ENCODE measurements at regions of chr17 and their contacts with region 1.

Region 1: DNA sequence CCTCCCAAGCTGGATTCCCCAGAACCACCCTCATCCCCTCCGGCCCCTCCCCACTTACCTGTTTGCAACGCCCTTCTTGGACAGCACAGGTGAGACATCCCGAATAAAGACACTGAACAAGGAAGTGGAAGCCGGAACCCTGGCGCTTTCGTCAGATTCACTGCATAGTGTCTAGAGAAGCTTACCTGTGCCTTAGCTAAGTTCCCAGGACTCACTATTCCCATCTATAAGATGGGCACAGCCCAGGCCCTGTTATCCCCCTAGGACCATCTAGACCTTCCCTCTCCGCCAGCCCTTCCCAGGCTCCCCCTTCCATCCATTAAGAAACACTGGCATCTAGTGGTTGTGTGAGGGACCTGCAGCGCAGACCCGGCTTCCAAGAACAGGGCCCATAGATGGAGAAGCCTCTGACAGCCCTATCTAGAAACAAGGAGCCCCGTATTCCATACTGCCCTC is 26.9 kb upstream of the RPL38 start:
- DNase-seq: peak; percentile 68 to 72 (median 72)
- ATAC-seq: peak; percentile 97
- H3K4me3 ChIP-seq: no peak overlapping the region
- H3K27ac ChIP-seq: no peak overlapping the region
- H3K4me1 ChIP-seq: no peaks in the 10 kb centered on the region
- H3K27me3 ChIP-seq: peaks cover 4 to 34% of the 10 kb centered on the region in 2 experiments; a peak in 3 of 5 replicates
- CTCF ChIP-seq: peak; percentile 84 to 91 (median 89)
- EP300 ChIP-seq: no peak
- POLR2A ChIP-seq: no peak
- RAD21 ChIP-seq: peak; percentile 88 to 96

Region 2: DNA sequence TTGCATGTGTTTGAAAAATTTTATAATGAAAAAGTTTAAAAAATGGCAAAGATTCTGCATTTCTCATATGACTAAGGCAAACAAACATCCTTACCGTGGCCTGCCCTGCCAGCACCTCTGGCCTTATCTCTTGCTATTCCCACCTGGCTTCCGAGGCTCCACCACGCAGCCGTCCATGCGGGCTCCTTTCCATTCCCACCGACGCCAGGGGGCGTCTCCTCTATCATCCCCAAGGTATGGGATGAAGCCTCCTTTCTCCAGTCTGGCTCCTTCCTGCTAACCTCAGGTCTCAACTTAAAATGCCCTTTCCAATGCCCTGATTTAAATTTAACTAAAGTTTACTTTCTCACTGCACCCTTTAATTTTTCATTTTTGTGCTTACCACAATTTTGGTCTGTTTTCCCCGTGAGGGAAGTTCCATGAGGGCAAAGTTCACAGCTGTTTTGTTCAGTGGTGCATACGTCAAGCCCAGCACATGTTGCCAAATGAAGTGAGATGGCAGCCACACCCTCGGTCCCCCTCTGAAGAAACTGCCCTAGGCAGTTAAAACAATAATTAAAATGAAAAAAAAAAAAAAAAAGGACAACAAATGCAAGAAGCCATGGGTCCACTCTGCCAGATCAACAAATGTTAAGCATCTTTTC is 519.0 kb before region 1 on chr17:
- CTCF ChIA-PET with region 1: interaction called, 4 read pairs
- POLR2A ChIA-PET with region 1: no interaction called
- in situ Hi-C with region 1: no loop called
- intact Hi-C with region 1: loop called (anchors 5 kb)
- DNase-seq: peak; percentile 29 to 59 (median 37)
- ATAC-seq: peak; percentile 81
- H3K4me3 ChIP-seq: no peak overlapping the region
- H3K27ac ChIP-seq: no peak overlapping the region
- H3K4me1 ChIP-seq: no peaks in the 10 kb centered on the region
- H3K27me3 ChIP-seq: peaks cover 0 to 11% of the 10 kb centered on the region in 2 experiments; a peak in 2 of 5 replicates
- CTCF ChIP-seq: peak; percentile 48 to 69 (median 63)
- EP300 ChIP-seq: no peak
- POLR2A ChIP-seq: no peak
- RAD21 ChIP-seq: peak in 1 of 2 experiments; percentile 49; a peak in 2 of 4 replicates

Region 3: GRCh38 chr17:73998653-73999645 is 177.6 kb before region 1 on chr17:
- CTCF ChIA-PET with region 1: no interaction called
- POLR2A ChIA-PET with region 1: no interaction called
- in situ Hi-C with region 1: no loop called
- intact Hi-C with region 1: loop called (anchors 5 kb)
- DNase-seq: peak; percentile 59 to 84 (median 82)
- ATAC-seq: peak; percentile 98
- H3K4me3 ChIP-seq: no peak overlapping the region
- H3K27ac ChIP-seq: no peak overlapping the region
- H3K4me1 ChIP-seq: no peaks in the 10 kb centered on the region
- H3K27me3 ChIP-seq: peaks cover 0 to 6% of the 10 kb centered on the region in 2 experiments; a peak in 4 of 5 replicates
- CTCF ChIP-seq: peak; percentile 73 to 86 (median 76)
- EP300 ChIP-seq: no peak
- POLR2A ChIP-seq: no peak
- RAD21 ChIP-seq: peak in 1 of 2 experiments; percentile 75; a peak in 2 of 4 replicates

Region 4: GRCh38 chr17:74089869-74090464 is 86.6 kb before region 1 on chr17:
- CTCF ChIA-PET with region 1: no interaction called
- POLR2A ChIA-PET with region 1: no interaction called
- in situ Hi-C with region 1: no loop called
- intact Hi-C with region 1: loop called (anchors 1 kb)
- DNase-seq: peak; percentile 62 to 71 (median 69)
- ATAC-seq: peak; percentile 90
- H3K4me3 ChIP-seq: no peak overlapping the region
- H3K27ac ChIP-seq: no peak overlapping the region
- H3K4me1 ChIP-seq: no peaks in the 10 kb centered on the region
- H3K27me3 ChIP-seq: peaks cover 0 to 5% of the 10 kb centered on the region in 2 experiments; a peak in 2 of 5 replicates
- CTCF ChIP-seq: peak; percentile 69 to 83 (median 78)
- EP300 ChIP-seq: no peak
- POLR2A ChIP-seq: no peak
- RAD21 ChIP-seq: peak in 1 of 2 experiments; percentile 75; a peak in 2 of 4 replicates

Region 5: DNA sequence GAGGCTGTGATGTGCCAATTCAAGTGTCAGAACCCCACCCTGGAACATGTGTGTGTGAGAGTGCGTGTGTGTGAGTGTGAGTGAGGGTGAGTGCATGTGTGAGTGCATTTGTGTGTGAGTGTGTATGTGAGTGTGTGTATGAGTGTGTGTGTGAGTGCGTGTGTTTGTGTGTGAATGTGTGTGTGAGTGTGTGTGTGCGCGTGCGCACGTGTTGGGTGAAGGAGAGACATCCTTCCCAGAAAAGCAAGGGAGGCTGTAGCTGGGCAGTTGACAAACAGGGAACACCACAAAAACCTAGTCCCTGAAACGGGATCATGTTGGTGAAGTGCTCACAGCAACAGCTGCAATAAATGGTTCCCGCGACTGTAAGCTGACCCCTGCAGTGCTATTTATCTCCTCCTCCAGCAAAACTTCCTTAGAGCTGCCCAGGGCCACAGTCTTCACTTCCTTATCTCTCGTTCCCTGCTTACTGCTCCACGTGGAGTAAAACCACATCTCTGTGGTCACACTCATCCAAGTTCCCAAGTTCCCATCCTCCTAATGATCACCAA is 13.2 kb before region 1 on chr17:
- CTCF ChIA-PET with region 1: no interaction called
- POLR2A ChIA-PET with region 1: no interaction called
- in situ Hi-C with region 1: no loop called
- intact Hi-C with region 1: no loop called
- DNase-seq: peak; percentile 23 to 79 (median 48)
- ATAC-seq: peak; percentile 93
- H3K4me3 ChIP-seq: no peak overlapping the region
- H3K27ac ChIP-seq: no peak overlapping the region; the same call in 2 of the 3 replicates
- H3K4me1 ChIP-seq: peaks cover 12 to 13% of the 10 kb centered on the region in 2 experiments; a peak in 4 of 5 replicates
- H3K27me3 ChIP-seq: peaks cover 6 to 32% of the 10 kb centered on the region in 2 experiments; a peak in 4 of 5 replicates
- CTCF ChIP-seq: no peak
- EP300 ChIP-seq: peak; percentile 42; the same call in 1 of the 2 replicates
- POLR2A ChIP-seq: no peak
- RAD21 ChIP-seq: no peak

Region 6: DNA sequence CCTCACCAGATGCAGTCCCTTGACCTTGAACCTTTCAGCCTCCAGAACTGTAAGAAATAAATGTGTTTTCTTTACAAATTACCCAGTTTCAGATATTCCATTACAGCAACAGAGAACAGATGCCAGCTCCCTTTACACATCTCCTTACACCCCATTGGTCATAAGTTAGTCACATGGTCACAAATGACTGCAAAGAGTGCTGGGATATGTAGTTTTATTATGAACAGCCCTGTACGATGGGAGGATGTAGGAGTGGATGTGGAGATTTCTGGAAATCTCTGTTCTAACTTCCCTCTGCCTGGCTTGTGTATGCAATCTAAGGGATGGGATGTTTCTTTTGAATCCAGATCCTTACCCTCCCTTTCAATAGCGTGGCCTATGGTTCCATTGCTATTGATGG is 13.6 kb after region 1 on chr17:
- CTCF ChIA-PET with region 1: no interaction called
- POLR2A ChIA-PET with region 1: no interaction called
- in situ Hi-C with region 1: no loop called
- intact Hi-C with region 1: no loop called
- DNase-seq: peak; percentile 41 to 84 (median 80)
- ATAC-seq: peak; percentile 99
- H3K4me3 ChIP-seq: no peak overlapping the region
- H3K27ac ChIP-seq: no peak overlapping the region
- H3K4me1 ChIP-seq: no peaks in the 10 kb centered on the region
- H3K27me3 ChIP-seq: peaks cover 12 to 49% of the 10 kb centered on the region in 2 experiments; a peak in 4 of 5 replicates
- CTCF ChIP-seq: no peak
- EP300 ChIP-seq: no peak
- POLR2A ChIP-seq: no peak
- RAD21 ChIP-seq: no peak